Activated T-helper 1 cell treated with anti-CD3 and anti-CD28 coated beads, Interleukin-12 subunit alpha, Interleukin-12 subunit beta, Interleukin-2, Interleukin-4 antibody, amounts not matched to agents 30 ng/mL and 10 ng/mL and 1 ng/mL, durations not matched to agents 14 hours and 24 hours and 36 hours (primary cell): ENCODE measurements at regions of chr1 and their contacts with region 1.

Region 1: GRCh38 chr1:89358287-89358893 is 5.5 kb upstream of the GBP6 start:
- DNase-seq: peak; percentile 76
- H3K4me3 Mint-ChIP-seq: peak overlapping the region; percentile 73
- H3K27ac Mint-ChIP-seq: peak overlapping the region; percentile 80
- H3K4me1 Mint-ChIP-seq: peaks cover 69% of the 10 kb centered on the region
- H3K27me3 Mint-ChIP-seq: no peaks in the 10 kb centered on the region

Region 2: DNA sequence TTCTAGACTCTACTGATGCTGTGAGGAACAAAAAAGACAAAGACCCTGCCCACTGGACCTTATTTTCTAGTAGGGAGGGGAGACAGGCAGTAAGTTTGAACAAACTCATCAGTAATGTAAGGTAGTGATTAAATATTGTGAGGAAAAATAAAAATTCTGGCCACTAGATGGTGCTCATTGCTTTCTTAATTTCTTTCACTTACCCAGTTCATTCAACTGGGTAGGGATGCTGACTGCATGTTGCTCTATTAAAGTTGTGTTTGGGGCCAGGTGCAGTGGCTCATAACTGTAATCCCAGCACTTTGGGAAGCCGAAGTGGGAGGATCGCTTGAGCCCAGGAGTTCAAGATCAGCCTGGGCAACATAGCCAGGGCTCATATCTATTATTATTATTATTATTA is 359.7 kb before region 1 on chr1:
- intact Hi-C with region 1: loop called (anchors 1 kb)
- DNase-seq: no peak
- H3K4me3 Mint-ChIP-seq: no peak overlapping the region
- H3K27ac Mint-ChIP-seq: no peak overlapping the region
- H3K4me1 Mint-ChIP-seq: peaks cover 25% of the 10 kb centered on the region
- H3K27me3 Mint-ChIP-seq: no peaks in the 10 kb centered on the region

Region 3: DNA sequence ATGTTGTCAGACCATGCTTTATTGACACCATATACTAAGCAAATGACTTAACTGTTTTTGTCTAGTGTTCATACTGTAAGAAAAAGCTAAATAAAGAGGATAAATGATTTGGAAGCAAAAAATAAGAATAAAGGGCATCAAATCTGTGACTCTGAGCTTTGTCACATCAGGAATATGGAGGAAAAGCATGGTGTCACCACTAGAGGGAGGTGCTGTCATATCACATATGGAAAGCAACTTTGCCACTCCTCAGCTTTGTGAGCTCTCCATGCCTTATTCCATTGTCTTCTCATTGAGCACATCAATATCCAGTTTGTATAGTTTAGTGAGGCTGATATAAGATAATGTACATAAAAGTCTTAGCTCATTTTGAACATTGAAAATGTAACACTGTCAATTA is 272.6 kb before region 1 on chr1:
- intact Hi-C with region 1: loop called (anchors 1 kb)
- DNase-seq: peak; percentile 47
- H3K4me3 Mint-ChIP-seq: no peak overlapping the region
- H3K27ac Mint-ChIP-seq: no peak overlapping the region
- H3K4me1 Mint-ChIP-seq: peaks cover 8% of the 10 kb centered on the region
- H3K27me3 Mint-ChIP-seq: peaks cover 2% of the 10 kb centered on the region

Region 4: DNA sequence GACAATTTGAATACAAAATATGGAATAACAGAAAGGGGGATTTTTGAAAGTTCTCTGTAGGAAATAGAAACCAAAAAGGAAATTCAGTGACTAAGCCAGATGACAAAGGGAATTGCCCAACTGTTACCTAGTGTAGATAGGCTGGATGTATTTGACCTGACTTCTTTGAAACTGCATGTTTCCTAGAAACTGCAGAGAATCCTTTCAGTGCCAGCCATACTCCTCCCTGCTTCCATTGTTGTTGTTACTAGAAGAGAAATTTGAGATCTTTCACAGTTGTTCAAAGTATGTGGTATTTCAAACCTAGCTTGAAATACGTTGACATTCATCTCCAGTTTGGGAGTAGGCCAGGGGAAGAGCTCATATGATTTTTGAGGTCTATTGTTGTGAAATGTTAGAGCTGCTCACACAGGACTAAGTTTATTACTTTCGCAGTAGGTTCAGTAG is 84.0 kb before region 1 on chr1:
- intact Hi-C with region 1: loop called (anchors 1 kb)
- DNase-seq: peak; percentile 43
- H3K4me3 Mint-ChIP-seq: peak overlapping the region; percentile 75
- H3K27ac Mint-ChIP-seq: peak overlapping the region; percentile 97
- H3K4me1 Mint-ChIP-seq: peaks cover 66% of the 10 kb centered on the region
- H3K27me3 Mint-ChIP-seq: no peaks in the 10 kb centered on the region

Region 5: DNA sequence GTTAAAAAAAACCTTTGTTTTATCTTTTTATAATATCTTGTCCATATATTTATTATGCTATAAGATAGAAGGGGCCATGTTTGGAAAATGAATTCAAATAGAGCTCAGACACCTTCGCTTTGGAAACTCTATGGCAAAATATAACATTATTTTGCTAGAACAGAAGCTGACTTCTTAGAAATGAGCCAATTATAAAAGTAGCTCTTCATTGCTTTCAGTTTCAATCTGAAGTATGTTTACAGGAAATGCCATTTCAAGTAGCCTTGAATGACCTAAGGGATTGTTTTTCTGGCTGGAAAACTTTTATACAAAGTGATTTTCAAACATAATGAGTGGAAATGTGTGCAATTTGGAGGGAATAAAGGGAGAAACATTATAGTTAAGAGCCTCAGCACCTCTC is 47.9 kb before region 1 on chr1:
- intact Hi-C with region 1: loop called (anchors 2 kb)
- DNase-seq: no peak
- H3K4me3 Mint-ChIP-seq: peak overlapping the region; percentile 47
- H3K27ac Mint-ChIP-seq: peak overlapping the region; percentile 87
- H3K4me1 Mint-ChIP-seq: peaks cover 64% of the 10 kb centered on the region
- H3K27me3 Mint-ChIP-seq: no peaks in the 10 kb centered on the region

Region 6: GRCh38 chr1:89425056-89425455 is 66.7 kb after region 1 on chr1:
- intact Hi-C with region 1: no loop called
- DNase-seq: no peak
- H3K4me3 Mint-ChIP-seq: no peak overlapping the region
- H3K27ac Mint-ChIP-seq: no peak overlapping the region
- H3K4me1 Mint-ChIP-seq: no peaks in the 10 kb centered on the region
- H3K27me3 Mint-ChIP-seq: peaks cover 19% of the 10 kb centered on the region